ENCODE measurements at regions of chr3 and their contacts with region 1.

Region 1: DNA sequence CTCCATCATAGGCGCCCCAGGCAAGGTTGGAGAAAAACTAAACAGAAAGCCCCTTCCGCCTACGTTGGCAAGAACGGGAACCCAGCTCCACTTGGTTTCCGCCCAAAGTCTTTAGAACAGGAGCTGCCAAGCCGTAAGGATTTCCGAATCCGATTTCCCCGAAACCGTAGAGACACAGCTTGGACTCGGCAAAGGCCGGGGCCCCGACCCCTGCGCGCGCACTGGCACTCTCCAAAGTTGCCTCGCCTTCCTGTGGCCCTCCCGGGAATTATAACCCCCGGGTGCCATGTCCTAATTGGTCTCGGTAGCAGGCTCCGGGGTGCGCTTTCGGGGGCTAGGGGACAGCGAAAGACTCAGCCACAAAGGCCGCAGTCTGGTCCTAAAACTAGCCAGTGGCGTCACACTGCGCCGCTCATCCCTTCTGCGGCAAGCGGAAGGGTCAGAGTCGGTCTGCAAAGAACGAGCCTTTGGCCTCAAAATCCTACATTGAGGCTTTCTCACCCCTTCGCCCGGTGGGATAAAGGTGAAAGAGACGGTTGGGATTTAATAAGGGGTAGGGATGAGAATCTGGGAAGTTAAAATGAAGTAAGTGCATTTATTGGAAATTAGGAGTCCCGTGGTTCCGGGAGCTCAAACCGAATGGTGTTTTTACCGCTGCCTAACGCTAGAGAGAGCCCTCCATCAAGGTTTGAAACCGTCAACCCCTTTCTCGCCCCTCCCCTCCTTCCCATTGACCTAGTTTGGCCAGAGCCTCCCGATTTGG is 6.8 kb downstream of the BCL6 start:
- DNase-seq: peak; percentile 65 to 78 (median 67)
- H3K4me3 ChIP-seq: peak overlapping the region; percentile 88 to 89
- H3K4me3 Mint-ChIP-seq: peak overlapping the region; percentile 95 to 99 (median 96)
- H3K27ac ChIP-seq: peak overlapping the region; percentile 73
- H3K27ac Mint-ChIP-seq: peak overlapping the region; percentile 77 to 99 (median 94)
- H3K4me1 ChIP-seq: peaks cover 34% of the 10 kb centered on the region
- H3K4me1 Mint-ChIP-seq: peaks cover 22 to 58% (median 36%) of the 10 kb centered on the region in 4 donors
- H3K27me3 ChIP-seq: no peaks in the 10 kb centered on the region
- H3K27me3 Mint-ChIP-seq: no peaks in the 10 kb centered on the region

Region 2: DNA sequence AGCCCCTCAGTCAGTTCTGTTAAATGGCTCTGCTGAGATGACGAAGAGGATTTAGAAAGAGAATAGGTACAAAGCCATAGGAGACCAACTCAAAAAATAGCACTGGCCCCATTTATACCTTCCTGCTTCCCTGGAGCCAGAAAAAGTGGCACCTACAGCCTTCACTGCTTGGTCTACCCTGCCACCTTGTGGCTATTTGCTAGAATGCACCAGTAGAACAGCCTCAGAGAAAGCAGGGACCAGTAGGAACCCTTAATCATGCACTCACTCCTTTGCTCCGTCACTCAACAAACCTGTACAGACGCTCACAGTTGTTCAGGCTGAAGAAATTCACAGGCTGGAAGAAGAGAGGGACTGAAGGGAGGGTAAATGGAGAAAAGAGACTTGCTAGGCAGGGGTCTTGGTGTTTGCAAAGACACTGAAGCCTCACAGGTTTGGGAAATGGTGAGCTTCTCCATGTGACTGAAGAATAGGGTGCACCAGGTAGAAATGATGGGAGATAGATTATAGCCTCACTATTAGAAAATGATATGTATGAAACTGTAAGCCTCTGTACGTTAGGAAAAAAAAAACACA is 24.0 kb before region 1 on chr3:
- CTCF ChIA-PET with region 1: interaction called, 29 read pairs
- POLR2A ChIA-PET with region 1: no interaction called
- intact Hi-C with region 1: no loop called
- DNase-seq: peak; percentile 65 to 75 (median 70)
- H3K4me3 ChIP-seq: no peak overlapping the region
- H3K4me3 Mint-ChIP-seq: peak overlapping the region in 2 of 8 donors; percentile 63 to 65
- H3K27ac ChIP-seq: no peak overlapping the region
- H3K27ac Mint-ChIP-seq: peak overlapping the region in 6 of 7 donors; percentile 13 to 61 (median 19)
- H3K4me1 ChIP-seq: peaks cover 15% of the 10 kb centered on the region
- H3K4me1 Mint-ChIP-seq: peaks cover 13 to 18% (median 17%) of the 10 kb centered on the region in 4 donors
- H3K27me3 ChIP-seq: no peaks in the 10 kb centered on the region
- H3K27me3 Mint-ChIP-seq: no peaks in the 10 kb centered on the region

Region 3: GRCh38 chr3:188000361-188000861 is 261.9 kb after region 1 on chr3:
- CTCF ChIA-PET with region 1: interaction called, 11 read pairs
- POLR2A ChIA-PET with region 1: no interaction called
- intact Hi-C with region 1: no loop called
- DNase-seq: peak in 2 of 5 donors; percentile 13 to 41
- H3K4me3 ChIP-seq: no peak overlapping the region
- H3K4me3 Mint-ChIP-seq: peak overlapping the region; percentile 67 to 86 (median 81)
- H3K27ac ChIP-seq: peak overlapping the region; percentile 41
- H3K27ac Mint-ChIP-seq: peak overlapping the region; percentile 89 to 97 (median 94)
- H3K4me1 ChIP-seq: peaks cover 68% of the 10 kb centered on the region
- H3K4me1 Mint-ChIP-seq: peaks cover 59 to 83% (median 68%) of the 10 kb centered on the region in 4 donors
- H3K27me3 ChIP-seq: no peaks in the 10 kb centered on the region
- H3K27me3 Mint-ChIP-seq: no peaks in the 10 kb centered on the region

Region 4: GRCh38 chr3:188400494-188401243 is 662.2 kb after region 1 on chr3:
- CTCF ChIA-PET with region 1: interaction called, 16 read pairs
- POLR2A ChIA-PET with region 1: interaction called, 3 read pairs
- intact Hi-C with region 1: loop called (anchors 5 kb)
- DNase-seq: no peak
- H3K4me3 ChIP-seq: no peak overlapping the region
- H3K4me3 Mint-ChIP-seq: peak overlapping the region in 1 of 8 donors; percentile 2
- H3K27ac ChIP-seq: no peak overlapping the region
- H3K27ac Mint-ChIP-seq: peak overlapping the region in 1 of 7 donors; percentile 43
- H3K4me1 ChIP-seq: peaks cover 32% of the 10 kb centered on the region
- H3K4me1 Mint-ChIP-seq: peaks cover 40 to 70% (median 56%) of the 10 kb centered on the region in 4 donors
- H3K27me3 ChIP-seq: no peaks in the 10 kb centered on the region
- H3K27me3 Mint-ChIP-seq: no peaks in the 10 kb centered on the region

Region 5: GRCh38 chr3:188788621-188789081 is 1050.1 kb after region 1 on chr3:
- CTCF ChIA-PET with region 1: interaction called, 11 read pairs
- POLR2A ChIA-PET with region 1: no interaction called
- intact Hi-C with region 1: no loop called
- DNase-seq: peak; percentile 31 to 79 (median 50)
- H3K4me3 ChIP-seq: no peak overlapping the region
- H3K4me3 Mint-ChIP-seq: no peak overlapping the region
- H3K27ac ChIP-seq: no peak overlapping the region
- H3K27ac Mint-ChIP-seq: no peak overlapping the region
- H3K4me1 ChIP-seq: peaks cover 18% of the 10 kb centered on the region
- H3K4me1 Mint-ChIP-seq: peaks cover 0 to 3% (median 0%) of the 10 kb centered on the region in 4 donors
- H3K27me3 ChIP-seq: no peaks in the 10 kb centered on the region
- H3K27me3 Mint-ChIP-seq: no peaks in the 10 kb centered on the region

Region 6: DNA sequence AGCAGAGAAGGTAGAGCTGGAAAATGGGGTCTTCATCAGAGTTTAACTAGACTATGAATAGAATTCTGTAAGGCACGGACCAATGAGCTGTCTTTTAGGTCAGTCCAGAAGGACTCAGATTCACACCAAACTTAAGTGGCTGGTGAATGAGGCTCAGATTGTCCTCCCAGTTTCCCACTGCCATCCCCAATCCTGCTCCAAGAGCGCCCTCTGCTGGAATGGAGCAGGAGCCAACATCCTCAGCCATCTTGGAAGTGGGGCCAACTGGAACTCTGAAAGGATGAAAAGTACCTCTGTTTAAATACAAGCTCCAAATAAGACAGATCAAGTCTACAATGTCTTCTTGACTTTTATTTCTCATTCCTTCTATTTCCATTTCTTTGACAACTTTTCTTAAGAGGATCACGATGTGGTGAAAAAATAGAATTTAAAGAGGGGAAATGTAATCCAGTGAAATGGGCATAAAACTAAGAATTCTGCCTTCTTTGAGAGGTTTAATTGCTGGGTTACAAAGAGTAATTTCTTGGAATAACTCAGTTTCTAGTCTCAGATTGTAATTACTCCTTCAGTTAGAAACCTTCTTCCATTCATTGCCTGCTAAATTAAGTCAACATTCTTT is 1216.2 kb after region 1 on chr3:
- CTCF ChIA-PET with region 1: interaction called, 729 read pairs
- POLR2A ChIA-PET with region 1: interaction called, 90 read pairs
- intact Hi-C with region 1: loop called (anchors 1 kb)
- DNase-seq: peak; percentile 48 to 76 (median 68)
- H3K4me3 ChIP-seq: no peak overlapping the region
- H3K4me3 Mint-ChIP-seq: no peak overlapping the region
- H3K27ac ChIP-seq: no peak overlapping the region
- H3K27ac Mint-ChIP-seq: peak overlapping the region in 1 of 7 donors; percentile 45
- H3K4me1 ChIP-seq: no peaks in the 10 kb centered on the region
- H3K4me1 Mint-ChIP-seq: no peaks in the 10 kb centered on the region
- H3K27me3 ChIP-seq: no peaks in the 10 kb centered on the region
- H3K27me3 Mint-ChIP-seq: no peaks in the 10 kb centered on the region

Region 7: DNA sequence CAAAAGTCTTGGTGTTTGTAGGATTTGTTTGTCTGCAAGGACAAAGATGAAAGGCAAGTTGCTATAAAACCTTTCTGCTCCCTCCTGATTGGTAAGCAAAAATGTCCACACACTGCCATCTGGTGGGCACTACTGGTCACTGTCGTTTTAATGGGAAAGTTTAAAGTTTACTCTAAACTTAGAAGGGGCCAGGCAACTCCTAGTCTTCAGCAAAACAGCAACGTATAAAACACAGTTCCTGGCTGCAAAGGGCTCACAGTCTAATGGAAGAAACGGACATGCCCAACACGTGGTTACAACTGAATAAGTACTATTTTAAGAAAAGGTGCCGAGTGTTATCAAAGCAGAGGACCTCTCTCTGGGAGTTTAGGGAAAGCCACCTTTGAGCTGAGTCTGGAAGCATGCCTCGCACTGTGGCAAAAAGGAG is 1409.6 kb after region 1 on chr3:
- CTCF ChIA-PET with region 1: interaction called, 391 read pairs
- POLR2A ChIA-PET with region 1: interaction called, 56 read pairs
- intact Hi-C with region 1: loop called (anchors 1 kb)
- DNase-seq: peak; percentile 50 to 61 (median 60)
- H3K4me3 ChIP-seq: no peak overlapping the region
- H3K4me3 Mint-ChIP-seq: no peak overlapping the region
- H3K27ac ChIP-seq: no peak overlapping the region
- H3K27ac Mint-ChIP-seq: peak overlapping the region in 1 of 7 donors; percentile 62
- H3K4me1 ChIP-seq: peaks cover 19% of the 10 kb centered on the region
- H3K4me1 Mint-ChIP-seq: peaks cover 13 to 28% (median 21%) of the 10 kb centered on the region in 4 donors
- H3K27me3 ChIP-seq: no peaks in the 10 kb centered on the region
- H3K27me3 Mint-ChIP-seq: no peaks in the 10 kb centered on the region